Right ventricle myocardium superior (tissue), 1 donor: ENCODE measurements at regions of chr1 and their contacts with region 1.

Region 1: GRCh38 chr1:27724961-27725373 is 794 bp upstream of the FAM76A start:
- DNase-seq: peak; percentile 61
- ATAC-seq: no peak

Region 2: GRCh38 chr1:27031235-27032118 is 693.5 kb before region 1 on chr1:
- intact Hi-C with region 1: no loop called
- DNase-seq: peak; percentile 88
- ATAC-seq: peak; percentile 90

Region 3: GRCh38 chr1:27536767-27537166 is 188.2 kb before region 1 on chr1:
- intact Hi-C with region 1: no loop called
- DNase-seq: peak; percentile 82
- ATAC-seq: peak; percentile 88

Region 4: GRCh38 chr1:27603681-27604578 is 121.0 kb before region 1 on chr1 and contains the start of gene AHDC1:
- intact Hi-C with region 1: no loop called
- DNase-seq: peak; percentile 96
- ATAC-seq: peak; percentile 75
- total RNA-seq, gene AHDC1: 47.4 TPM

Region 5: DNA sequence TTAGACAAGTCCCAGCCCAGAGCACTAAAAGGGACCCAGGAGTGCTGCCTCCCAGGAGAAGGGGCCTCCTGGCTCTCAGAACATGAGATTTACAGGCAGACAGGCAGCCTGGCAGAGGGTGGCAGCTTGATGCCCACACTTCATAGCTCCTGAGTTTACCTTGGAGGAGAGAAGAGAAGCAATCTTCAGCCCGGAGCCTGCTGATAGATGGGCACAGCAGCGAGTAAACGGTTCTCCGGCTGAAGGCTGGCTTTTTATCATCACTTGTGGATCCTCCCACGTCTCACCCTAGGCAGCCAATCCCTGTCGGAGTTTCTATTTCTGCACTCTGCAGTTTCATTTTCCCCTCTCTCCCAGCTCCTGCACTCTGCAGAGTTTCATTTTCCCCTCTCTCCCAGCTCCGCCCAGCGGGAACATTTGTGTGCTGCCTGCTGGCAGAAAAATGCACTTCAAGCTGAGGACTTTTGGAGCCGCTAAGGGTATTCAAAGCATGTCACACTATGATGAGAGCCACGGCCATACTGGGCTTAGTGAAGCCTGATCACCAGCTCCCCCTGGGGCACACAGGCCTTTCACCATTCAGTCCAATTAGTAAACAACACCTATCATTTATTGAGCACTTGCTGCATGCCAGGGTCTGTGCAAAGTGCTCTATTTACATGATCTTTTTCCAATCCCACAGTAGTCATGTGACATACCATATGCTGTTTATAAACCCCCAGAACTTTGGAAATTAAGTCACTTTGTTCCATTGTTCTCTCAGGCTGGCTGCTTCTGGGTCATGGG is 52.8 kb before region 1 on chr1 and contains the start of gene IFI6:
- intact Hi-C with region 1: loop called (anchors 5 kb)
- DNase-seq: peak; percentile 86
- ATAC-seq: peak; percentile 98
- total RNA-seq, gene IFI6: 29.2 TPM